Activated CD4-positive, alpha-beta memory T cell treated with anti-CD3 and anti-CD28 coated beads for 36 hours (primary cell): ENCODE measurements at regions of chr16 and their contacts with region 1.

Region 1: GRCh38 chr16:4402439-4403132 is 13.8 kb downstream of the CORO7 start:
- DNase-seq: peak; percentile 74
- H3K4me3 Mint-ChIP-seq: no peak overlapping the region
- H3K27ac Mint-ChIP-seq: no peak overlapping the region
- H3K4me1 Mint-ChIP-seq: no peaks in the 10 kb centered on the region
- H3K27me3 Mint-ChIP-seq: no peaks in the 10 kb centered on the region

Region 2: DNA sequence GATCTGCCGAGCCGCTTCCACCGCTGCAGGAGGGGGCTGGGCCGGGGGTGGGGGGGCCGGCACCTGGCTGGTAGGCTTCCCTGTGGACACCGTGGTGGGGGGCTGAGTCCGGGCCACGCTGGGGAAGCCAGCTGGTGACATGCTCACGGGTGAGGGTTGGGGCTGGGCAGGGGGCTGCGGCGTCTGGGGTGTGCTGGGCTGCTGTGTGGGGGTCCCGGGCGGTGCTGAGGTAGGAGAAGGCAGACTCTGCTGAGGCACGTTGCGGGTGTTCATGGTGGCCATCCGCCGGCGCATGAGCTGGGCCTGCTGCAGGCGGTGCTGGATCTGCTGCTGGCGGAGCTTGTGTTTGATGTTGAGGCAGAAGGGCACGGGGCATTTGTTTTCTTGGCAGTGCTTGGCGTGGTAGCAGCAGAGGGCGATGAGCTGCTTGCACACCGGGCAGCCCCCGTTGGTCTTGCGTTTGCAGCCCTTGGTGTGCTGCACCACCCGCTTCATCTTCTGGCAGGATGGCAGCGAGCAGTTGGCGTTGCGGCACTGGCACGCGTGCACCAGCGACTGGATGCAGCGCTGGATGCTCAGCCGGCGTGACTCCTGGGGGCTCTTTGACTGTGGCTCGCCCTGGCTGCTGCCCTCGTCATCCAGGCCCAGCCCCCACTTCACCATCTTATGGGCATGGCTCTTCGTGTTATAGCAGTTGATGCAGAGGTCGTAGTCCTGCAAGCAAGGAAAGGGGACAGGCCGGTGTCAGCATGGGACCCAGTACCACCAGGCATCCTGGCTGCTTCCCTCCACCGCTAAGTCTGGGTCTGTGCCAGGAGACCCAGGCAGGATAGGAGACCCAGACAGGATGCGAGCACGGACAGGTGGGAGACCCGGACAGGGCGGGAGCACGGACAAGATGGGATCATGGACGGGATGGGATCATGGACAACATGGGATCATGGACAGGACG is 673.1 kb before region 1 on chr16:
- CTCF ChIA-PET with region 1: no interaction called
- POLR2A ChIA-PET with region 1: no interaction called
- intact Hi-C with region 1: no loop called
- DNase-seq: no peak
- H3K4me3 Mint-ChIP-seq: no peak overlapping the region
- H3K27ac Mint-ChIP-seq: no peak overlapping the region
- H3K4me1 Mint-ChIP-seq: no peaks in the 10 kb centered on the region
- H3K27me3 Mint-ChIP-seq: no peaks in the 10 kb centered on the region

Region 3: GRCh38 chr16:4288148-4288921 is 114.3 kb before region 1 on chr16:
- CTCF ChIA-PET with region 1: interaction called, 11 read pairs
- POLR2A ChIA-PET with region 1: no interaction called
- intact Hi-C with region 1: no loop called
- DNase-seq: peak; percentile 82
- H3K4me3 Mint-ChIP-seq: no peak overlapping the region
- H3K27ac Mint-ChIP-seq: no peak overlapping the region
- H3K4me1 Mint-ChIP-seq: peaks cover 5% of the 10 kb centered on the region
- H3K27me3 Mint-ChIP-seq: peaks cover 10% of the 10 kb centered on the region

Region 4: DNA sequence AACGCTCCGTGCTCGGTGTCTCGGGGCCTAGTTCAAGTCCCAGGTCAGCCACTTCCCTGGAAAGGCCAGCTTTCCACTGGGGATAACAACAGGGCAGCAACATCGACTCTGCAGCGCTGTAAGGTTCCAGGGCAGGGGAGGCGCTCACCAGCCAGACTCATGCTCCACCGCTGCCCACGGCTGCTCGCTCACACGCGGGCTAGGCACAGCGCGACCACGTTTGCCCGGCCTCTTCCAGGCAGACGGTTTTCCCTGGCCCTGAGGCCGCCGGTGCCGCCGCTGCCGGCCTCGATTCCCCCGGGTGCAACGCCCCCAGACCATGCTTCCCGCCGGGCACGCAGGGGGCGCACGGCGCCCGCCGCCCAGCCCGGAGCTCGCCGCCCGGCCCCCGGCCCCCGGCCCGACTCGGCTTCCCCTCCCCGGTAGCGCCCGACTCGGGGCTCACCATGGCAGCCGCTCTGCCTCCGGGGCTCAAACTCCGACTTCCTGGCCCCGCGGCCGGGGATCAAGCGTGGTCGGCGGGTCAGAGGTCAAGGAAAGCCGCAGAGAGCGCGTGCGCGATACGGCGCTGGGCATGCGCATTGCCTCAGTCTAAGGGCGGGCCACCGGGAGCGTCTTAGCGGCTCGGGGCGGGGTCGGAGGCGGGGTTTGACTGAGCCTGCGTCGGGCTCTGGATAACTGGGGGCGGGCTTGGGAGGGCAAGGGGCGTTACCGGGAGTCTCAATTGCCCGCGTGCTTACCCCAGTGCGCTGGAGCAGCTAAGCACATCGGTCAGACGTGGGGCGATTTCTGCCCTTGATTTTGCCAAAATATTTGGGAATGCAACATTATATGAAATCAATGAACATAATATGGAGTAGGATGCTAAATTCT is 51.6 kb before region 1 on chr16 and contains the start of gene PAM16:
- CTCF ChIA-PET with region 1: interaction called, 22 read pairs
- POLR2A ChIA-PET with region 1: interaction called, 5 read pairs
- intact Hi-C with region 1: no loop called
- DNase-seq: peak; percentile 99
- H3K4me3 Mint-ChIP-seq: peak within 1 kb of the TSS; percentile 97
- H3K27ac Mint-ChIP-seq: peak within 1 kb of the TSS; percentile 89
- H3K4me1 Mint-ChIP-seq: peaks cover 29% of the 10 kb centered on the region
- H3K27me3 Mint-ChIP-seq: no peaks in the 10 kb centered on the region
- total RNA-seq, gene PAM16: 52.8 to 63.4 TPM

Region 5: GRCh38 chr16:4358831-4359561 is 43.6 kb before region 1 on chr16:
- CTCF ChIA-PET with region 1: interaction called, 34 read pairs
- POLR2A ChIA-PET with region 1: no interaction called
- intact Hi-C with region 1: loop called (anchors 2 kb)
- DNase-seq: peak; percentile 71
- H3K4me3 Mint-ChIP-seq: no peak overlapping the region
- H3K27ac Mint-ChIP-seq: no peak overlapping the region
- H3K4me1 Mint-ChIP-seq: no peaks in the 10 kb centered on the region
- H3K27me3 Mint-ChIP-seq: no peaks in the 10 kb centered on the region

Region 6: DNA sequence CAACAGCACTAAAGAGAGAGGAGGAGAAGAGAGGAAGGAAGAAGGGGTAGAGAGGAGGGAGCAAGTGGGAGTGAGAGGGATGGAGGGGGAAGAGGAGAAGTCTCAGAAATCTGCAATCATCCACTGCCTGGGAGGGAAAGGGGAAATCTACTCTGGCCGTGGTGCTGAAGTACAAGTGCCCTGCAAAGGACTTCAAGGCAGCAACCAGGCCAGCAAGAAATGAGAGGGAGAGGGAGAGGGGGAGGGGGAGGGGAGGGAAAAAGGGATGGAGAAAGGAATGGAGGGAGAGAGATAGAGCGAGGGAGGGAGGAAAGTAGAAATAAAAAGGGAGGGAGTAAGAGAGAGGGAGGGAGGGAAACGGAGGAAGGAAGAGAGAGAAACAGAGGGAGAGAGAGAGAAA is 825.8 kb after region 1 on chr16:
- CTCF ChIA-PET with region 1: no interaction called
- POLR2A ChIA-PET with region 1: no interaction called
- intact Hi-C with region 1: no loop called
- DNase-seq: no peak
- H3K4me3 Mint-ChIP-seq: no peak overlapping the region
- H3K27ac Mint-ChIP-seq: no peak overlapping the region
- H3K4me1 Mint-ChIP-seq: no peaks in the 10 kb centered on the region
- H3K27me3 Mint-ChIP-seq: peaks cover 23% of the 10 kb centered on the region